Esophagus muscularis mucosa (tissue), 4 donors: ENCODE measurements at regions of chr18 and their contacts with region 1.

Region 1: DNA sequence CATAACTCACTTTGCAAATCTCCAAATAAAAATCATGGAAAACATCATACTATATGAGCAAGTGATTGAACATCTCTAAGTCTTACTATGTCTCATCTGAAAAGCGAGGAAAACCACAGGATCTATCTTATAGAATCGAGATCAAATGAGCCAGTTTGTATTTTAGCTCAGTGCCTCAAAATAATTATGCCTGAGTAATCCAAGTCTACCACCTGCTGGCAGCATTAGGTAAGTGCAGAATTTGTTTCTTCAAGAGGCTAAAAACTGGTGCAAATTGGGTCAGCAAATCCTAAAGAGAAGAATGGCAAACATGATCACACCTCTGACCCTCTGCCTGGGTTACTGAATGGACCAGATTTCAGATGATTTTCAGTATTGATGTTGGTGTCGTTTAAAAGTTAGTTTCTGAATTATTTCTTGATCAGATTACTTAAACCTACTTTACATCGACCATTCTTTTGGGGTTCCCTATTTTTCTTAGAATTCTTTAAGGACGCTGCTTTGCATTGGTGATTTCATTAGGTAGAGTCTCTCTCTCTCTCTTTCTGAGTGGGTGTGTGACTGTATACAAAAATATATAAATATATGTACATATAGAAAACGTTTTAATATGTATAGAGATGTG is 12.7 kb upstream of the FHOD3 start:
- DNase-seq: peak; percentile 66
- H3K4me3 ChIP-seq: no peak overlapping the region
- H3K27ac ChIP-seq: no peak overlapping the region
- H3K4me1 ChIP-seq: no peaks in the 10 kb centered on the region
- H3K27me3 ChIP-seq: peaks cover 0 to 9% (median 0%) of the 10 kb centered on the region in 4 donors
- CTCF ChIP-seq: peak; percentile 84 to 89 (median 85)
- EP300 ChIP-seq: no peak
- POLR2A ChIP-seq: no peak

Region 2: DNA sequence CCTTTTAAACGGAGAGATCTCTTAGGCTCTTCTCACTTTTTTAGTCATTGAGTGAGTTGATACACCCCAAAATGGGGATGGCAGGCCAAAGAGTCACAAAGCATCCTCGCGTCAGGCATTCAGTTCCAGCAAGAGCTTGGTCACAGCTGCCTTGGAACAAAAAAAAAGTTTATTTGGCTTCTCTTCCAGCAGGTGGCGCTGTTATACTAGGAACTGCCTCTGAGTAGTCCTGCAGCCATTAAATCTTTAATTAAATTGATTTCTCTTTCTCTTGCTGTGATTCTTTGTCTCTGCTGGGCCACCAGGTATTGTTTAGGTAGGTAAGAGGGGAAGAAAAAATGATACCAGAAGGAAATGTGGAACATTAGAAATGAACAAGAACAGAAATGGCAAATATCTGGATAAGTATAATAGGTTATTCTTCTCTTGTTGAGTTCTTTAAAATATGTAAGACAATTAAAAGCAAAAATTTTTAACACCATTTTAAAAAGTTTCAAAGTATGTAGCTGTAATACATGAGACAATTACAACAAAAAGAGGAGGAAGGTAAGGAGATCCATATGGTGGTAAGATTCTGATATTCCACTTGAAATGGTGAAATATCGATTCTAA is 528.2 kb before region 1 on chr18:
- intact Hi-C with region 1: loop called (anchors 5 kb)
- DNase-seq: peak; percentile 37
- H3K4me3 ChIP-seq: no peak overlapping the region
- H3K27ac ChIP-seq: no peak overlapping the region
- H3K4me1 ChIP-seq: peaks cover 0 to 4% (median 2%) of the 10 kb centered on the region in 4 donors
- H3K27me3 ChIP-seq: no peaks in the 10 kb centered on the region
- CTCF ChIP-seq: peak; percentile 76 to 78 (median 77)
- EP300 ChIP-seq: no peak
- POLR2A ChIP-seq: no peak

Region 3: DNA sequence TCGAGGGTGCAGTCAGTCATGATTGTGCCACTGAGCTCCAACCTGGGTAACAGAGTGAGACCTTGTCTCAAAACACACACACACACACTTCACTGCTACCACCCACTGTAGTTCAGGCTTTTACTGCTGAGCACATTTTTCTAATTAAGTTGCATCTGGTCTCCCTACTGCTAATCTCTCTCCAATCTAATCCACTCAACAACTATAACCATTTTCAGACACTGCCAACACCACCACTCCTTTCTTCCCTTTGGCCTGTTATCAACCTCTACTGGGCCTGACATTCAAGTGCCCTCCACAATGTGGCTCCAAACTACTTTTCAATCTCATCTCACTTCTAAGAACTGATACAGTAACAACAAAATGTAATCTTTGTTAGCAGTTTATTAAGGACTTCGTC is 267.6 kb before region 1 on chr18:
- intact Hi-C with region 1: loop called (anchors 1 kb)
- DNase-seq: no peak
- H3K4me3 ChIP-seq: no peak overlapping the region
- H3K27ac ChIP-seq: no peak overlapping the region
- H3K4me1 ChIP-seq: peaks cover 0 to 7% (median 3%) of the 10 kb centered on the region in 4 donors
- H3K27me3 ChIP-seq: no peaks in the 10 kb centered on the region
- CTCF ChIP-seq: no peak
- EP300 ChIP-seq: no peak
- POLR2A ChIP-seq: no peak

Region 4: GRCh38 chr18:36095936-36096519 is 188.8 kb before region 1 on chr18:
- intact Hi-C with region 1: loop called (anchors 2 kb)
- DNase-seq: no peak
- H3K4me3 ChIP-seq: no peak overlapping the region
- H3K27ac ChIP-seq: no peak overlapping the region
- H3K4me1 ChIP-seq: no peaks in the 10 kb centered on the region
- H3K27me3 ChIP-seq: peaks cover 0 to 9% (median 0%) of the 10 kb centered on the region in 4 donors
- CTCF ChIP-seq: peak; percentile 48 to 57 (median 52)
- EP300 ChIP-seq: no peak
- POLR2A ChIP-seq: no peak